ENCODE measurements at regions of chr22 and their contacts with region 1.

Region 1: GRCh38 chr22:40415531-40416266 is 45.3 kb downstream of the SGSM3 start:
- DNase-seq: no peak
- ATAC-seq: peak; percentile 59
- H3K4me3 ChIP-seq: peak overlapping the region; percentile 49
- H3K27ac ChIP-seq: peak overlapping the region; percentile 71
- H3K4me1 ChIP-seq: peaks cover 44% of the 10 kb centered on the region
- H3K27me3 ChIP-seq: no peaks in the 10 kb centered on the region
- CTCF ChIP-seq: no peak
- EP300 ChIP-seq: no peak
- POLR2A ChIP-seq: no peak; the same call in none of the 2 replicates
- RAD21 ChIP-seq: no peak

Region 2: DNA sequence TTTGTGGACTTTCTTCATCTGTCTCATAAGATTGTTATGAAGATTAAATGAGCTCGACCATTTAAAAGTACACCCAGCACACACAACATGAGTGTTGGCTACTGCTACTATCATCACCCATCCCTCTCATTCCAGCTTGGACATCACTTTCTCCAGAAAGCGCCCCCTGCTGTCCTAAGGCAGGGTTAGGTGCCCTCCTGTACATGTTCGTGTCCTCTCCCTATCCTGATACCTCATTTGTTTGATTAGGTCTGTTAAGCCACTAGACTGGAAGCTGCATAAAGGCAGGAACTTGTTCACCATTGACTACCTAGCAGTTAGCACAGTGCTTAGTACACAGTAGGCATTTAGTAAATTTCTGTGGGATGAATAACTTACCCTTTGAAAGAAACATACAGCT is 607.6 kb before region 1 on chr22:
- CTCF ChIA-PET with region 1: no interaction called
- POLR2A ChIA-PET with region 1: no interaction called
- RAD21 ChIA-PET with region 1: no interaction called
- SMC1A ChIA-PET with region 1: no interaction called
- in situ Hi-C with region 1: no loop called
- intact Hi-C with region 1: no loop called
- DNase-seq: no peak
- ATAC-seq: 0 out of 3 replicates have a peak, but pooled peaks have one; percentile 34
- H3K4me3 ChIP-seq: no peak overlapping the region
- H3K27ac ChIP-seq: no peak overlapping the region
- H3K4me1 ChIP-seq: peaks cover 11% of the 10 kb centered on the region
- H3K27me3 ChIP-seq: no peaks in the 10 kb centered on the region
- CTCF ChIP-seq: peak in 2 of 3 experiments; percentile 24 to 27; a peak in 1 of 6 replicates
- EP300 ChIP-seq: no peak
- POLR2A ChIP-seq: no peak
- RAD21 ChIP-seq: 0 out of 2 replicates have a peak, but pooled peaks have one; percentile 3

Region 3: DNA sequence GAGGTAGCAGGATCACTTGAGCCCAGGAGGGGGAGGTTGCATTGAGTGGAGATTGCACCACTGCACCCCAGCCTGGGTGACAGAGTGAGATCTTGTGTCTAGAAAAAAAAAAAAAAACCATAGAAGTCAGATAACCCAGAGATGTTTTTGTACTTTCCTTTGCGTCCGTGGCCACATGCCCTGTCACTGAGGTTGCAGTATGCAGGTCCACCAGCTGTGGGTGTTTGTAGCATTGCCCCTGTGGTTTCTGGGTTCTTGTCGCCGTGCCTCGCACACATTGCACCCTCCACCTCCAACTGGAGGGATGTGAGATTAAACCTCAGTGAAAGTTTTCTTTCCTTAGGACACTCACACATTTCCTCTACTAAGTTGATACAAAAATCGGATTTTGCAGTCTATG is 167.7 kb before region 1 on chr22:
- CTCF ChIA-PET with region 1: no interaction called
- POLR2A ChIA-PET with region 1: no interaction called
- RAD21 ChIA-PET with region 1: no interaction called
- SMC1A ChIA-PET with region 1: no interaction called
- in situ Hi-C with region 1: no loop called
- intact Hi-C with region 1: no loop called
- DNase-seq: no peak
- ATAC-seq: no peak
- H3K4me3 ChIP-seq: no peak overlapping the region
- H3K27ac ChIP-seq: no peak overlapping the region
- H3K4me1 ChIP-seq: peaks cover 7% of the 10 kb centered on the region; the same call in 1 of the 2 replicates
- H3K27me3 ChIP-seq: no peaks in the 10 kb centered on the region
- CTCF ChIP-seq: no peak
- EP300 ChIP-seq: no peak
- POLR2A ChIP-seq: no peak
- RAD21 ChIP-seq: no peak

Region 4: GRCh38 chr22:40400159-40400558 is 15.5 kb before region 1 on chr22:
- CTCF ChIA-PET with region 1: interaction called, 10 read pairs
- POLR2A ChIA-PET with region 1: interaction called, 5 read pairs
- RAD21 ChIA-PET with region 1: interaction called, 7 read pairs
- SMC1A ChIA-PET with region 1: interaction called, 7 read pairs
- in situ Hi-C with region 1: no loop called
- intact Hi-C with region 1: no loop called
- DNase-seq: peak; percentile 63
- ATAC-seq: peak; percentile 70
- H3K4me3 ChIP-seq: no peak overlapping the region
- H3K27ac ChIP-seq: peak overlapping the region; percentile 68; the same call in 1 of the 2 replicates
- H3K4me1 ChIP-seq: peaks cover 38% of the 10 kb centered on the region
- H3K27me3 ChIP-seq: no peaks in the 10 kb centered on the region
- CTCF ChIP-seq: no peak
- EP300 ChIP-seq: no peak
- POLR2A ChIP-seq: no peak
- RAD21 ChIP-seq: no peak

Region 5: DNA sequence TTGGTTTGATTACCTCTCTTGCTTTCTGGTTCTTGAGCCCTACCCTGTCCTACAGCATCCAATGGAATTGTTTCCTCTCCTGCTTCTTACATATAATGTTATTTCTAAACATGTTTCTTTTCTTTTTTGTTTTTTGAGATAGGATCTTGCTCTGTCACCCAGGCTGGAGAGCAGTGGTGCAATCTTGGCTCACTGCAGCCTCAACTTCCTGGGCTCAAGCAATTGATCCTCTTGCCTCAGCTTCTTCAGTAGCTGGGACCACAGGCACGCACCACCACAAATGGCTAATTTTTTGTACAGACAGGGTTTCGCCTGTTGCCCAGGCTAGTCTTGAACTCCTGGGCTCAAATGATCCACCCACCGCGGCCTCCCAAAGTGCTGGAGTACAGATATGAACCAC is 60.6 kb after region 1 on chr22:
- CTCF ChIA-PET with region 1: no interaction called
- POLR2A ChIA-PET with region 1: no interaction called
- RAD21 ChIA-PET with region 1: no interaction called
- SMC1A ChIA-PET with region 1: no interaction called
- in situ Hi-C with region 1: no loop called
- intact Hi-C with region 1: no loop called
- DNase-seq: no peak
- ATAC-seq: no peak
- H3K4me3 ChIP-seq: no peak overlapping the region
- H3K27ac ChIP-seq: no peak overlapping the region
- H3K4me1 ChIP-seq: peaks cover 15% of the 10 kb centered on the region
- H3K27me3 ChIP-seq: no peaks in the 10 kb centered on the region
- CTCF ChIP-seq: no peak
- EP300 ChIP-seq: no peak
- POLR2A ChIP-seq: no peak
- RAD21 ChIP-seq: no peak

Region 6: DNA sequence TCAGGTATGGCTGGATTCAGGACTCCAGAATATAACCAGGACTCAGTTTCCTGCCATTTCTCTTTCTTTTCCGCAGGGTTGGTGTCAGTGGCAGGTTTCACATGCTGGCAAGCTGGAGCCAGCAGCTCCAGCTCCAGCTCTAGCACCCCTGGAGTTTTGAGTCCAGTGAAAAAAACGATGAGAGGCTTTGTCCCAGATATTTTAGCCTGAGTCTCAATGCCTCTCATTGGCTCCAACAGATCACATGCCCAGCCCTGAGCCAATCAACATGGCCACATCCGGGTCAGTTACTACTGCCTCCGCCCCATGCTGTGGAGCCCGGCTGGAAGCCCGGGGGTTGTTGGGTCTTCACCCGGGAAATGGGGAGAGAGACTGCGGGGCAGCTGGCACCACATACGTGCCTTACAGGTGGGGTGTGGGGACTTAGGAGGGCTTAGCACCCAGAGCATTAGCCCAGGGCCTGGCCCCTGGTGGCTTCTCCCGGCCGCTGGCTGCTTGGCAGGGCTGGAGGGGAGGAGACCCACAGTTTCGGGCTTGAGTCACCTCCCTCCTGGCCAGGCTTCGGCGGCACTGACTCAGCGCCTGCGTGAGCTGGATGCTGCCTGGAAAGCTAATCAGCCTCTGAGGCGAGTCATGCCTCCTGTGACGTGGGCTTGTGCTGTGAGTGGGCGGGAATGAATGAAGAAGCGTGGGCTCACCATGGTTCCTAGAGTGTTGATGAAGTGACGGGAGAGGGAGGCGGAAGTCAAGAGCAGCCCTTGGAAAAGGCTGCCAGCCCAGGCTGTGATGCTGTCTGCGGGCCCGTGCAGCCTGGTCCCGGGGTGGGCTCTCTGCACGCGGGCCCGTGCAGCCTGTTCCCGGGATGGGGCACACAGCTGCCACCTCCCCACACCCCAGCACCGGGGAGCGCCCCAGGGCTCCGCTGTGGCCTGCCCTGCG is 236.1 kb after region 1 on chr22:
- CTCF ChIA-PET with region 1: interaction called, 10 read pairs
- POLR2A ChIA-PET with region 1: no interaction called
- RAD21 ChIA-PET with region 1: interaction called, 7 read pairs
- SMC1A ChIA-PET with region 1: interaction called, 7 read pairs
- in situ Hi-C with region 1: no loop called
- intact Hi-C with region 1: no loop called
- DNase-seq: no peak
- ATAC-seq: peak; percentile 85
- H3K4me3 ChIP-seq: peak overlapping the region; percentile 49; the same call in 1 of the 2 replicates
- H3K27ac ChIP-seq: peak overlapping the region; percentile 85
- H3K4me1 ChIP-seq: peaks cover 8% of the 10 kb centered on the region
- H3K27me3 ChIP-seq: no peaks in the 10 kb centered on the region
- CTCF ChIP-seq: no peak
- EP300 ChIP-seq: no peak
- POLR2A ChIP-seq: peak; percentile 91
- RAD21 ChIP-seq: no peak